Testis (tissue), 5 donors: ENCODE measurements at regions of chr17 and their contacts with region 1.

Region 1: DNA sequence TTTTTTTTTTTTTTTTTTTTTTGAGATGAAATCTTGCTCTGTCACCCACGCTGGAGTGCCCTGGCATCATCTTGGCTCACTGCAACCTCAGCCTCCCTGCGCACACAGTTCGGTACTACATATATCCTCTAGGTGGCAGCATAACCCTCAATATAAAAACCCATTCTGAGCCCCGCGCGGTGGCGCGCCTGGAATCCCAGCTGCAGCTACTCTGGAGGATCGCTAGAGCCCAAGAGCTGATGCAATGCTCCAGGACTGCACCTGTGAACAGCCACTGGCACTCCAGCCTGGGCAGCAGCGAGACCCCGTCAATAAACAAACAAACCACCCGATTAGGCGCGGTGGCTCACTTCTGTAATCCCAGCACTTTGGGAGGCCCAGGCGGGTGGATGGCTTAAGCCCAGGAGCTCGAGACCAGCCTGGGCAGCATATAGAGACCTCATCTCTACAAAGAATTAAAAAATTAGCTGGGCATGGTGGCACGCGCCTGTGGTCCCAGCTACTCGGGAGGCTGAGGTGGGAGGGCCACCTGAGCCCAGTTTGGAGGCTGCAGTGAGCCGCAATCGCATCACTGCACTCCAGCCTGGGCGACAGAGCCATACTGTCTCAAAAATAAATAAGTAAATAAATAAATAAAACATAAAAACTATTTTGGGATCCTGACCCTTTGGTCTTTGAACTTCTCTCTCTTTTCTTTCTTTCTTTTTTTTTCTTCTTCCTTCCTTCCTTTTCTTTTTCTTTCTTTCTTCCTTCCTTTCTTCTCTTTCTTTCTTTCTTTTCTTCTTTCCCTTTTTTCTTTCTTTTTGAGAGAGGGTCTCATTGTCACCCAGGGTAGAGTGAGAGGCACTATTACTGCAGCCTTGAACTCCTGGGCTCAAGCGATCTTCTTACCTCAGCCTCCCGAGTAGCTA is 15.4 kb upstream of the AKAP10 start:
- DNase-seq: peak; percentile 95
- H3K4me3 ChIP-seq: peak overlapping the region in 1 of 2 donors; percentile 20
- H3K27ac ChIP-seq: no peak overlapping the region
- H3K4me1 ChIP-seq: no peaks in the 10 kb centered on the region
- H3K27me3 ChIP-seq: no peaks in the 10 kb centered on the region
- CTCF ChIP-seq: peak; percentile 60 to 82 (median 75)
- POLR2A ChIP-seq: no peak

Region 2: GRCh38 chr17:20121359-20122253 is 128.5 kb after region 1 on chr17:
- intact Hi-C with region 1: loop called (anchors 5 kb)
- DNase-seq: peak; percentile 84
- H3K4me3 ChIP-seq: no peak overlapping the region
- H3K27ac ChIP-seq: no peak overlapping the region
- H3K4me1 ChIP-seq: peaks cover 8% of the 10 kb centered on the region
- H3K27me3 ChIP-seq: no peaks in the 10 kb centered on the region
- CTCF ChIP-seq: peak; percentile 74 to 87 (median 82)
- POLR2A ChIP-seq: no peak